ENCODE measurements at regions of chr7 and their contacts with region 1.

Region 1: GRCh38 chr7:79652619-79653018 is 199.2 kb upstream of the MAGI2 start:
- DNase-seq: no peak
- H3K4me3 ChIP-seq: no peak overlapping the region
- H3K4me3 Mint-ChIP-seq: no peak overlapping the region
- H3K27ac ChIP-seq: no peak overlapping the region
- H3K27ac Mint-ChIP-seq: no peak overlapping the region
- H3K4me1 ChIP-seq: no peaks in the 10 kb centered on the region
- H3K4me1 Mint-ChIP-seq: no peaks in the 10 kb centered on the region
- H3K27me3 ChIP-seq: no peaks in the 10 kb centered on the region
- H3K27me3 Mint-ChIP-seq: peaks cover 0 to 1% (median 0%) of the 10 kb centered on the region in 3 donors
- CTCF ChIP-seq: no peak

Region 2: GRCh38 chr7:79668292-79668691 is 15.7 kb after region 1 on chr7:
- intact Hi-C with region 1: no loop called
- DNase-seq: no peak
- H3K4me3 ChIP-seq: no peak overlapping the region
- H3K4me3 Mint-ChIP-seq: no peak overlapping the region
- H3K27ac ChIP-seq: no peak overlapping the region
- H3K27ac Mint-ChIP-seq: no peak overlapping the region
- H3K4me1 ChIP-seq: no peaks in the 10 kb centered on the region
- H3K4me1 Mint-ChIP-seq: no peaks in the 10 kb centered on the region
- H3K27me3 ChIP-seq: no peaks in the 10 kb centered on the region
- H3K27me3 Mint-ChIP-seq: no peaks in the 10 kb centered on the region
- CTCF ChIP-seq: no peak

Region 3: DNA sequence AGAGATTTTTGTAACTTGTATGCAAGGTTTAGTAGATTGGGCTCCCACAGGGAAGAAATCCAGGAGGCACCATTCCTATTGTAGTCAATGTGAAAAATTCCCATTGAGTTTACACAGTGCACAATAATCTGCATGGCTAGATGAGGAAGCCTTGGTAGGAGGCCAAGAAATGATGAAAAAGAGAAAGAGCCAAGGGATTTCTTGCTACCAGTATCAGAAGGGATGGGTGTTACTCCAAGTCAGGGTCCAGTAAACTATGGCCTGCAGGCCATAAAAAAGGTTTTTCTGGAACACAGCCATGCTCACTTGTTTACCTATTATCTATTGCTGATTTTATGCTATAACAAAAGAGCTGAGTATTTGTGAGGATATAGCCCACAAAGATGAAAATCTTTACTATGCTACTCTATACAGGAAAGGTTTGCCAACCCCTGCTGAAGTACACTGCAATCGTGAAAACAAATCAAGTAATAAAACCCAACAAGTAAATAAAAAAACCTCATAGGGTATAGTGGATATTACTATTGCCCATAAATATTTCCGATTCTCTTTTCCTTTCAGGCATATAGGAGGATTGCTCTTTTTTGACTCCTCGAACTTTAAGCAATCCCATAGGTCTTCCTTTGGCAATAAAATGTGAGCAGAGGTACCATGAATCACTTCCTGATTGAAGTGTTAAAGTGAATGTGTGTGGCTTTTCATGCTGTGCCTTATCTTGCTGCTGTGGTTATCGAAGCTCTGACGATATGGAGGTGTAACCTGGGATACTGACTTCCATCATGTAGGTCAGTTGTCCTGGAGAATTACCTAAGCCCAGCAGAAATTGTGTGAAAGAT is 57.2 kb after region 1 on chr7:
- intact Hi-C with region 1: loop called in 1 of 2 experiments (anchors 10 kb)
- DNase-seq: no peak
- H3K4me3 ChIP-seq: no peak overlapping the region
- H3K4me3 Mint-ChIP-seq: no peak overlapping the region
- H3K27ac ChIP-seq: no peak overlapping the region
- H3K27ac Mint-ChIP-seq: no peak overlapping the region
- H3K4me1 ChIP-seq: no peaks in the 10 kb centered on the region
- H3K4me1 Mint-ChIP-seq: no peaks in the 10 kb centered on the region
- H3K27me3 ChIP-seq: no peaks in the 10 kb centered on the region
- H3K27me3 Mint-ChIP-seq: no peaks in the 10 kb centered on the region
- CTCF ChIP-seq: no peak

Measured in CD14-positive monocyte (primary cell).